B cell (primary cell): ENCODE measurements at regions of chr9 and their contacts with region 1.

Region 1: GRCh38 chr9:127199001-127199791 is 65.4 kb upstream of the GARNL3 start:
- DNase-seq: peak; percentile 85
- ATAC-seq: peak; percentile 89
- H3K4me3 ChIP-seq: no peak overlapping the region
- H3K4me3 Mint-ChIP-seq: no peak overlapping the region
- H3K27ac ChIP-seq: no peak overlapping the region
- H3K27ac Mint-ChIP-seq: no peak overlapping the region
- H3K4me1 ChIP-seq: peaks cover 0 to 6% of the 10 kb centered on the region in 2 donors
- H3K4me1 Mint-ChIP-seq: peaks cover 2% of the 10 kb centered on the region
- H3K27me3 ChIP-seq: no peaks in the 10 kb centered on the region
- H3K27me3 Mint-ChIP-seq: no peaks in the 10 kb centered on the region
- CTCF ChIP-seq: peak; percentile 91

Region 2: GRCh38 chr9:126947529-126947928 is 251.7 kb before region 1 on chr9:
- CTCF ChIA-PET with region 1: interaction called, 217 read pairs
- POLR2A ChIA-PET with region 1: no interaction called
- intact Hi-C with region 1: no loop called
- DNase-seq: no peak
- ATAC-seq: no peak
- H3K4me3 ChIP-seq: no peak overlapping the region
- H3K4me3 Mint-ChIP-seq: no peak overlapping the region
- H3K27ac ChIP-seq: no peak overlapping the region
- H3K27ac Mint-ChIP-seq: no peak overlapping the region
- H3K4me1 ChIP-seq: no peaks in the 10 kb centered on the region
- H3K4me1 Mint-ChIP-seq: peaks cover 2% of the 10 kb centered on the region
- H3K27me3 ChIP-seq: no peaks in the 10 kb centered on the region
- H3K27me3 Mint-ChIP-seq: no peaks in the 10 kb centered on the region
- CTCF ChIP-seq: peak; percentile 9

Region 3: GRCh38 chr9:126985870-126986498 is 213.2 kb before region 1 on chr9:
- CTCF ChIA-PET with region 1: interaction called, 18 read pairs
- POLR2A ChIA-PET with region 1: no interaction called
- intact Hi-C with region 1: loop called (anchors 1 kb)
- DNase-seq: peak; percentile 90
- ATAC-seq: peak; percentile 91
- H3K4me3 ChIP-seq: peak overlapping the region in 1 of 5 experiments; percentile 12
- H3K4me3 Mint-ChIP-seq: peak overlapping the region; percentile 80
- H3K27ac ChIP-seq: no peak overlapping the region
- H3K27ac Mint-ChIP-seq: peak overlapping the region; percentile 72
- H3K4me1 ChIP-seq: peaks cover 24 to 26% of the 10 kb centered on the region in 2 donors
- H3K4me1 Mint-ChIP-seq: peaks cover 33% of the 10 kb centered on the region
- H3K27me3 ChIP-seq: peaks cover 0 to 8% (median 0%) of the 10 kb centered on the region in 4 experiments
- H3K27me3 Mint-ChIP-seq: no peaks in the 10 kb centered on the region
- CTCF ChIP-seq: no peak

Region 4: GRCh38 chr9:127244609-127245601 is 45.7 kb after region 1 on chr9:
- CTCF ChIA-PET with region 1: no interaction called
- POLR2A ChIA-PET with region 1: no interaction called
- intact Hi-C with region 1: loop called (anchors 1 kb)
- DNase-seq: peak; percentile 93
- ATAC-seq: peak; percentile 100
- H3K4me3 ChIP-seq: peak overlapping the region; percentile 50 to 77 (median 66)
- H3K4me3 Mint-ChIP-seq: peak overlapping the region; percentile 94
- H3K27ac ChIP-seq: peak overlapping the region in 1 of 2 donors; percentile 18
- H3K27ac Mint-ChIP-seq: peak overlapping the region; percentile 86
- H3K4me1 ChIP-seq: peaks cover 5 to 11% of the 10 kb centered on the region in 2 donors
- H3K4me1 Mint-ChIP-seq: peaks cover 11% of the 10 kb centered on the region
- H3K27me3 ChIP-seq: peaks cover 0 to 3% (median 0%) of the 10 kb centered on the region in 4 experiments
- H3K27me3 Mint-ChIP-seq: no peaks in the 10 kb centered on the region
- CTCF ChIP-seq: no peak

Region 5: GRCh38 chr9:127555768-127556397 is 356.7 kb after region 1 on chr9:
- CTCF ChIA-PET with region 1: no interaction called
- POLR2A ChIA-PET with region 1: no interaction called
- intact Hi-C with region 1: no loop called
- DNase-seq: peak; percentile 62
- ATAC-seq: peak; percentile 72
- H3K4me3 ChIP-seq: no peak overlapping the region
- H3K4me3 Mint-ChIP-seq: peak overlapping the region; percentile 16
- H3K27ac ChIP-seq: no peak overlapping the region
- H3K27ac Mint-ChIP-seq: no peak overlapping the region
- H3K4me1 ChIP-seq: peaks cover 21 to 28% of the 10 kb centered on the region in 2 donors
- H3K4me1 Mint-ChIP-seq: peaks cover 21% of the 10 kb centered on the region
- H3K27me3 ChIP-seq: no peaks in the 10 kb centered on the region
- H3K27me3 Mint-ChIP-seq: no peaks in the 10 kb centered on the region
- CTCF ChIP-seq: no peak